ENCODE measurements at regions of chr16 and their contacts with region 1.

Region 1: GRCh38 chr16:69754469-69755310 is at the start of gene NOB1:
- DNase-seq: peak; percentile 96
- H3K4me3 ChIP-seq: peak within 1 kb of the TSS; percentile 86 to 98
- H3K27ac ChIP-seq: peak within 1 kb of the TSS; percentile 40 to 45; a peak in 2 of 4 replicates
- H3K4me1 ChIP-seq: peaks cover 0 to 2% of the 10 kb centered on the region in 2 experiments; a peak in 2 of 4 replicates
- H3K27me3 ChIP-seq: no peaks in the 10 kb centered on the region
- CTCF ChIP-seq: peak; percentile 89
- EP300 ChIP-seq: no peak
- RAD21 ChIP-seq: peak; percentile 88
- polyA plus RNA-seq, gene NOB1: 79.5 and 86.3 TPM in 2 replicates

Region 2: DNA sequence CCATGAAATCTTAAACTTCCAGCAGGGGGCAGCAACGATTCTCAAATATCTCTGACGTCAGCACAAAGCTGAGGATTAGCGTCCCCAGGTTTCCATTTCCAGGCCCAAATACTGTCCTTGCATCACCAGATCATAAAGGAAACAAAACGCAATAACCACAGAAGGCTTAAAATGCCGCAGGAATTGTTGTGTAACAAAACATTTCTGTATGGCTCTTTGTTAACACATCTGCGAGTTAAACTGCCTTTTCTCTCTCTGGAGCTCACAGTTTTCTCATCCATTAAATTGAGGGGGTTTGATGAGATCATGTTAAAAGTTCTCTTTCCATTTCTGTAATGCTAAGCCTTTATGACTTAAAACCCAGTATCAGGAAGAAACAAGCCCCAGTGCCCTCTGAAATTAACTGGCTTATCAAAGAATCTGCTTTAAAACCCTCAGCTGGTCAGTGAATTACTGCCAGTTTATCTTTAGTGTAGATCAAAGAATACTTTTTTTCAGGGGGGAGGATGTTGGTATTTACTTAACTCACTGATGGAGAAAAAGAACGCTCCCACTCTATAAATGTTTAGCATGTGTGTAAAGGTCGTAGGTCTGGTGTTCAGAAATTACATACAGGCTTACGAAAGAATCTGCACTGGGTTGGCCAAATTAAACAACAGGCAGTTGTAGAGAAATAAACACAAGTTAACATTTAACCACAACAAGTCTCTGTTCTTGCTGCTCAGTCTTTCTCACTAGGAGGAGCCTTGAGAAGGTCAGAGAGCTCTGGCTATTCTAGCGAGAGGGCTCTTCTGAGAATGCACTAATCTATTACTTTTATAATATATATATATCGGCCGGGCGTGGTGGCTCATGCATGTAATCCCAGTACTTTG is 358.3 kb before region 1 on chr16:
- CTCF ChIA-PET with region 1: interaction called, 32 read pairs
- POLR2A ChIA-PET with region 1: interaction called, 5 read pairs
- DNase-seq: peak; percentile 68
- H3K4me3 ChIP-seq: peak overlapping the region in 1 of 2 experiments; percentile 30; a peak in 1 of 4 replicates
- H3K27ac ChIP-seq: peak overlapping the region; percentile 81 to 84
- H3K4me1 ChIP-seq: peaks cover 3 to 23% of the 10 kb centered on the region in 2 experiments
- H3K27me3 ChIP-seq: no peaks in the 10 kb centered on the region
- CTCF ChIP-seq: peak; percentile 76
- EP300 ChIP-seq: no peak
- RAD21 ChIP-seq: peak; percentile 81

Region 3: DNA sequence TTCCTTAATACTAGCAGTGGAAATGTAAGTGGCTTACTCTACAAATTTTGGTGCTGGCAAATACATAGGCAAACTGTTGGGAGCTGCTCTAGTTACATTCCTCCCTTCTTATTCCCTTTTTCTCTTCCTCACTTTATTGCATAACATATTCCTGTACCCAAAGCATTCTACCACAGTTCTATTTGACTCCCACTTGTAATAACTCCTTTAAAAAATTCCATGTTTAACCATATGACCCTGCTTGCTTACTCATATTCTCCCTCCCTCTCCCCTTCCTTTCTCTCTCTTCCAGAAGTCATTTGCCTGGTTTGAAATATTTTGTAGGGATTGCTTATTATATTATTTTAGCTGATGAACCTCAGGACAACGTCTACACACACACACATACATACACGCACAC is 51.1 kb before region 1 on chr16:
- CTCF ChIA-PET with region 1: interaction called, 67 read pairs
- POLR2A ChIA-PET with region 1: interaction called, 4 read pairs
- DNase-seq: no peak
- H3K4me3 ChIP-seq: no peak overlapping the region
- H3K27ac ChIP-seq: peak overlapping the region in 1 of 2 experiments; percentile 6; a peak in 1 of 4 replicates
- H3K4me1 ChIP-seq: peaks cover 0 to 5% of the 10 kb centered on the region in 2 experiments; a peak in 2 of 4 replicates
- H3K27me3 ChIP-seq: no peaks in the 10 kb centered on the region
- CTCF ChIP-seq: no peak
- EP300 ChIP-seq: no peak
- RAD21 ChIP-seq: no peak

Region 4: GRCh38 chr16:69709456-69710084 is 45.1 kb before region 1 on chr16:
- CTCF ChIA-PET with region 1: interaction called, 67 read pairs
- POLR2A ChIA-PET with region 1: interaction called, 4 read pairs
- DNase-seq: peak; percentile 59
- H3K4me3 ChIP-seq: no peak overlapping the region
- H3K27ac ChIP-seq: peak overlapping the region in 1 of 2 experiments; percentile 26; a peak in 1 of 4 replicates
- H3K4me1 ChIP-seq: no peaks in the 10 kb centered on the region
- H3K27me3 ChIP-seq: no peaks in the 10 kb centered on the region
- CTCF ChIP-seq: peak; percentile 77
- EP300 ChIP-seq: no peak
- RAD21 ChIP-seq: peak; percentile 86

Region 5: GRCh38 chr16:69726296-69727060 is 28.2 kb before region 1 on chr16 and contains the start of gene NQO1:
- CTCF ChIA-PET with region 1: interaction called, 19 read pairs
- POLR2A ChIA-PET with region 1: interaction called, 12 read pairs
- DNase-seq: peak; percentile 94
- H3K4me3 ChIP-seq: peak within 1 kb of the TSS; percentile 48 to 80
- H3K27ac ChIP-seq: peak within 1 kb of the TSS; percentile 88 to 97
- H3K4me1 ChIP-seq: peaks cover 17 to 18% of the 10 kb centered on the region in 2 experiments; a peak in 3 of 4 replicates
- H3K27me3 ChIP-seq: no peaks in the 10 kb centered on the region
- CTCF ChIP-seq: no peak
- EP300 ChIP-seq: no peak
- RAD21 ChIP-seq: 0 out of 2 replicates have a peak, but pooled peaks have one; percentile 0
- polyA plus RNA-seq, gene NQO1: 152 and 162 TPM in 2 replicates

Region 6: GRCh38 chr16:69741919-69742904 is 12.5 kb before region 1 on chr16:
- CTCF ChIA-PET with region 1: interaction called, 10 read pairs
- POLR2A ChIA-PET with region 1: interaction called, 6 read pairs
- DNase-seq: peak; percentile 52
- H3K4me3 ChIP-seq: no peak overlapping the region
- H3K27ac ChIP-seq: peak overlapping the region; percentile 12 to 15; a peak in 2 of 4 replicates
- H3K4me1 ChIP-seq: no peaks in the 10 kb centered on the region; a peak in 1 of 4 replicates
- H3K27me3 ChIP-seq: no peaks in the 10 kb centered on the region
- CTCF ChIP-seq: no peak
- EP300 ChIP-seq: no peak
- RAD21 ChIP-seq: no peak

Measured in SK-N-SH (cell line).